Activated CD4-positive, alpha-beta T cell treated with anti-CD3 and anti-CD28 coated beads for 36 hours (primary cell): ENCODE measurements at regions of chr20 and their contacts with region 1.

Region 1: GRCh38 chr20:46132705-46133120 is 14.6 kb downstream of the CD40 start:
- DNase-seq: peak; percentile 81
- ATAC-seq: peak; percentile 96
- H3K4me3 Mint-ChIP-seq: no peak overlapping the region
- H3K27ac Mint-ChIP-seq: no peak overlapping the region
- H3K4me1 Mint-ChIP-seq: peaks cover 2% of the 10 kb centered on the region
- H3K27me3 Mint-ChIP-seq: peaks cover 32% of the 10 kb centered on the region

Region 2: DNA sequence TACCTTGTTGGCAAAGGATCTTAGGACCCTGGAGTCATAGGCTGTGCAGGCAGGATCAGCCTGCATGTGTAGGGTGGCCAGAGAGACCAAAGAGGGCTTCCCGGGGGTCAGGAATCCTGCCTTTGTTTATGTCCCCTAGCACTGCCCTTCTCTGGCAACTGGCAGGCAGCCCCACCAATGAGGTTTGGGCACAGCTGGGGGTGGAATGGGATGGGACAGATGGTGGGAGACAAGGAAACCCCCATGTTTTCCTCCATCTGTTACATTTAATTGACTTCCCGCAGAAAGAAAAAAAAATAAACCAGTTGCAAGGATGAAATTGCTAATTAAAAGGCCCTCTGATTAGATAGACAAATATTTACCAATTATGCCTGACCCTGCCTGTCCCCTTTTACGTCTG is 13.0 kb after region 1 on chr20:
- CTCF ChIA-PET with region 1: interaction called, 11 read pairs
- POLR2A ChIA-PET with region 1: no interaction called
- intact Hi-C with region 1: no loop called
- DNase-seq: no peak
- ATAC-seq: no peak
- H3K4me3 Mint-ChIP-seq: no peak overlapping the region
- H3K27ac Mint-ChIP-seq: no peak overlapping the region
- H3K4me1 Mint-ChIP-seq: no peaks in the 10 kb centered on the region
- H3K27me3 Mint-ChIP-seq: peaks cover 14% of the 10 kb centered on the region

Region 3: DNA sequence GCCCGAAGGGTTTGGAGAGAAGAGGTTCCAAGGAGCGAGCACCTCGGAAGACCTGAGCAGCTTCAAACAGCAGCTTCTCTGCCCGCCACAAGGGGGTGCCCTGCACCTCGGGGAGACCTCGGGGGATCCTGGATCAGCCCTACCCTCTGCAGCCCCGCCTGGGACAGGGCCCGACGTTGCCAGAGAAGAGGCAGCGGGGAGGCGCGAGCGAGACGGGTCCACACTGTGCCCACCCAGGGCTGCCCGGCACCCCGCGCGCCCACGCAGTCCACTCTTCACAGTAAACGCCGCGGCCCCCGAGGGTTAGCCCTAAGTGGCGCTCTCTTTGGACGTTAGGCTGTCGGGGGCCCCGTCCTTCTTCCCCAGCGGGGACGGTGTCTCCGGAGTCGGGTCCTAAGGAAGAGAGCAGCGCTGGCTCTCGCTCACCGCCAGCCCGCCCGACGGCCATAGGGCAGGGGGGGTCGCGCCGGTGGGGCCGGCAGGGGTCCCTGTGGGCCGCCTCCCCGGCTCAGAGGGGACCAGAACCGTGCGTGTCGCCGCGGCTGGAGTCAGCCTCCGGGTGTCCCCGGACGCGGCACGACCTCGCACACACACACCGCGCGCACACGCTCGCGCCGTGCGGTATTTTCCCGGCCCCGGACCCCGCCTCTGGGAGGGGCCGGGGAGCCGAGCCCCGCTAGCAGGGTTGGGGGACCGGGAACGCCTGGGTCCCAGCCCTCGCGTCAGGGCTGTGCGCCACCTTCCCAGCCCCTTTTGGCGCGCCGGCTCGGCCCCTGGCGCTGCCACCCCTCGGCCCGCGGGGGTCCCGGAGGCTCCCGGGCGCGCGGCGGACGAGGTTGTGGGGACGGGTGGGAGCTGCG is 174.7 kb after region 1 on chr20:
- CTCF ChIA-PET with region 1: no interaction called
- POLR2A ChIA-PET with region 1: no interaction called
- intact Hi-C with region 1: loop called in 1 of 2 experiments (anchors 2 kb)
- DNase-seq: peak; percentile 87
- ATAC-seq: peak; percentile 90
- H3K4me3 Mint-ChIP-seq: no peak overlapping the region
- H3K27ac Mint-ChIP-seq: no peak overlapping the region
- H3K4me1 Mint-ChIP-seq: peaks cover 8% of the 10 kb centered on the region
- H3K27me3 Mint-ChIP-seq: peaks cover 61% of the 10 kb centered on the region

Region 4: GRCh38 chr20:46411637-46412036 is 278.9 kb after region 1 on chr20:
- CTCF ChIA-PET with region 1: interaction called, 3 read pairs
- POLR2A ChIA-PET with region 1: no interaction called
- intact Hi-C with region 1: loop called in 1 of 2 experiments (anchors 1 kb)
- DNase-seq: no peak
- ATAC-seq: no peak
- H3K4me3 Mint-ChIP-seq: no peak overlapping the region
- H3K27ac Mint-ChIP-seq: no peak overlapping the region
- H3K4me1 Mint-ChIP-seq: peaks cover 28% of the 10 kb centered on the region
- H3K27me3 Mint-ChIP-seq: peaks cover 7% of the 10 kb centered on the region

Region 5: GRCh38 chr20:46681032-46681854 is 548.5 kb after region 1 on chr20:
- CTCF ChIA-PET with region 1: interaction called, 4 read pairs
- POLR2A ChIA-PET with region 1: no interaction called
- intact Hi-C with region 1: loop called in 1 of 2 experiments (anchors 1 kb)
- DNase-seq: peak; percentile 83
- ATAC-seq: peak; percentile 80
- H3K4me3 Mint-ChIP-seq: no peak overlapping the region
- H3K27ac Mint-ChIP-seq: no peak overlapping the region
- H3K4me1 Mint-ChIP-seq: peaks cover 29% of the 10 kb centered on the region
- H3K27me3 Mint-ChIP-seq: no peaks in the 10 kb centered on the region